Esophagus muscularis mucosa (tissue), 4 donors: ENCODE measurements at regions of chr1 and their contacts with region 1.

Region 1: GRCh38 chr1:209692745-209693504 is 11.7 kb upstream of the HSD11B1 start:
- DNase-seq: no peak
- H3K4me3 ChIP-seq: no peak overlapping the region
- H3K27ac ChIP-seq: no peak overlapping the region
- H3K4me1 ChIP-seq: peaks cover 0 to 7% (median 0%) of the 10 kb centered on the region in 4 donors
- H3K27me3 ChIP-seq: no peaks in the 10 kb centered on the region
- CTCF ChIP-seq: peak; percentile 78 to 81 (median 80)
- EP300 ChIP-seq: no peak
- POLR2A ChIP-seq: no peak

Region 2: DNA sequence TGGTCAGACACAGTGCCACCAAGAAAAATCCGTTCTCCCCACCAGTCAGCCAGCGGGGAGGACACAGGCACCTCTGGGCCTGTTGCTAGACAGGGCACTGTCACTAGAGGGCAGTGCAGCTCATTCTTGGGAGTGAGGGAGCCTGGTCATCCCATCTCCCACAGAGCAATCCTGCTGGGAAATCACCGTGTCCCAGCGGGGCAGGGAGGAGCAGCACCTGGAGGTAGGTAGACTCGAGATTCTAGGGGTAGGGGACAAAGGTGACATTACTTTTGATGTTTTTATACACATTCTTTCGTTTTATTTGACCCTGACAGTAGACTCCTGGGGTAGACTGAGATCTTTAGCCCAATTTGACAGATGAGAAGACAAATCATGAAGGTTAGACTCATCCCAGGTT is 116.1 kb before region 1 on chr1:
- intact Hi-C with region 1: loop called (anchors 2 kb)
- DNase-seq: no peak
- H3K4me3 ChIP-seq: no peak overlapping the region
- H3K27ac ChIP-seq: no peak overlapping the region
- H3K4me1 ChIP-seq: peaks cover 0 to 4% (median 0%) of the 10 kb centered on the region in 4 donors
- H3K27me3 ChIP-seq: peaks cover 0 to 27% (median 2%) of the 10 kb centered on the region in 4 donors
- CTCF ChIP-seq: peak; percentile 84 to 98 (median 86)
- EP300 ChIP-seq: no peak
- POLR2A ChIP-seq: no peak

Region 3: DNA sequence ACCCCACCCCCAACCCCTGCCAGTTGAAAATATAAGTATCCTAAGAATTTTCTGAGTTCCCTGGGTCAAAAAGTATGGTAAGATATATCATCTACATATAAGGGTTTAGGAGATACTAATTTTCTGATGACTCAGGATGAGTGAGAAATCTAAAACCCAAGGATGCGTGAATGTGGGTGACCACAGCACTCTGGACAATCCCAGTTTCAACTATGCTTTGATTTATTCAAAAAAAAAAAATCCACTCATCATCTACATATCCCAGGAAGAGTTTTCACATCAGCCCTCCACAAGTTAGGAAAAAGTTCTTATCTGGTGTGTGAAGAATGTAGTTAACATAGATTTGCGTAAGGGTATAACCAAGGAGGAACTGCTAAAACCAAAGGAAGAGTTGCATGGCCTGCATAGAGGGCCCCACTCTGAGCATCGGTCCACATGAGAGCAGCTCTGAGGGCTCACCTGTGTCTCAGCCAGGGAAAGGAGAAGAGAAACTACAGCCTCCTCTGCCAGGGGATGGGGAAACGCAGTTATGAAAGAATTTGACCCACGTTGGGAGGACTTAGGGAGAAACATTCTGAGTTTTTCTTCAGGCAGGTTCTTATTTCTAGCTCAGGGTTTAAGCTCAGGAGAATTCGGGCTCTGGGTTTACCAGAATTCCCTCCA is 59.5 kb before region 1 on chr1:
- intact Hi-C with region 1: loop called (anchors 5 kb)
- DNase-seq: no peak
- H3K4me3 ChIP-seq: no peak overlapping the region
- H3K27ac ChIP-seq: no peak overlapping the region
- H3K4me1 ChIP-seq: peaks cover 10 to 14% (median 13%) of the 10 kb centered on the region in 4 donors
- H3K27me3 ChIP-seq: no peaks in the 10 kb centered on the region
- CTCF ChIP-seq: no peak
- EP300 ChIP-seq: no peak
- POLR2A ChIP-seq: no peak

Region 4: GRCh38 chr1:209747580-209748262 is 54.8 kb after region 1 on chr1:
- intact Hi-C with region 1: loop called (anchors 5 kb)
- DNase-seq: peak; percentile 97
- H3K4me3 ChIP-seq: peak overlapping the region; percentile 32 to 56 (median 42)
- H3K27ac ChIP-seq: peak overlapping the region in 3 of 4 donors; percentile 26 to 55 (median 31)
- H3K4me1 ChIP-seq: peaks cover 16 to 20% (median 18%) of the 10 kb centered on the region in 4 donors
- H3K27me3 ChIP-seq: no peaks in the 10 kb centered on the region
- CTCF ChIP-seq: peak; percentile 80 to 92 (median 82)
- EP300 ChIP-seq: no peak
- POLR2A ChIP-seq: no peak